ENCODE measurements at regions of chr11 and their contacts with region 1.

Region 1: GRCh38 chr11:3160252-3161031 is 4.7 kb downstream of the OSBPL5 start:
- DNase-seq: peak; percentile 87 to 91
- ATAC-seq: peak; percentile 75 to 88 (median 84)
- H3K4me3 ChIP-seq: peak overlapping the region; percentile 26 to 67 (median 58)
- H3K27ac ChIP-seq: peak overlapping the region in 9 of 10 donors; percentile 54 to 84 (median 74)
- H3K4me1 ChIP-seq: peaks cover 22 to 91% (median 79%) of the 10 kb centered on the region in 9 donors
- H3K27me3 ChIP-seq: no peaks in the 10 kb centered on the region
- CTCF ChIP-seq: no peak

Region 2: DNA sequence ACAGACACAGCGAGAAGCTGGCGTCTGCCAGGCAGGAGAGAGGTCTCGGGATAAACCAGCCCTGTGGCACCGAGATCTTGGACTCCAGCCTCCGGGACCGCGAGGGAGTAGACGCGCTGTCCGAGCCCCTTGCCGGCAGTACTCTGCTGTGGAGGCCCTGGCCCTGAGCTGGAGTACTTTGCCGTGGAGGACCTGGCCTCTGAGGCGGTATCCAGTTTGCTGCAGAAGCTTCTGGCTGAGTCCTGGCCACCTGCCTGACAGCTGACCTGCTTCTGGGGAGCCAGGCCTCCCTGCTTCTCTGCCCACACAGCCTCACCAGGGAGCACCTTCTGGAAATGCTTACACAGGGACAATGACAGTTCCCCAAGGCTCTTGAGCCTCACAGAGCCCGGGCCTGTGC is 71.6 kb before region 1 on chr11:
- intact Hi-C with region 1: no loop called
- DNase-seq: no peak
- ATAC-seq: no peak
- H3K4me3 ChIP-seq: no peak overlapping the region
- H3K27ac ChIP-seq: no peak overlapping the region
- H3K4me1 ChIP-seq: peaks cover 0 to 17% (median 5%) of the 10 kb centered on the region in 9 donors
- H3K27me3 ChIP-seq: no peaks in the 10 kb centered on the region
- CTCF ChIP-seq: no peak

Region 3: GRCh38 chr11:3109921-3110706 is 50.3 kb before region 1 on chr11:
- intact Hi-C with region 1: loop called in 1 of 10 experiments (anchors 10 kb)
- DNase-seq: peak in 1 of 2 donors; percentile 45
- ATAC-seq: peak; percentile 8 to 75 (median 73)
- H3K4me3 ChIP-seq: no peak overlapping the region
- H3K27ac ChIP-seq: no peak overlapping the region
- H3K4me1 ChIP-seq: peaks cover 0 to 19% (median 0%) of the 10 kb centered on the region in 9 donors
- H3K27me3 ChIP-seq: no peaks in the 10 kb centered on the region
- CTCF ChIP-seq: peak; percentile 47 to 76 (median 68)

Region 4: DNA sequence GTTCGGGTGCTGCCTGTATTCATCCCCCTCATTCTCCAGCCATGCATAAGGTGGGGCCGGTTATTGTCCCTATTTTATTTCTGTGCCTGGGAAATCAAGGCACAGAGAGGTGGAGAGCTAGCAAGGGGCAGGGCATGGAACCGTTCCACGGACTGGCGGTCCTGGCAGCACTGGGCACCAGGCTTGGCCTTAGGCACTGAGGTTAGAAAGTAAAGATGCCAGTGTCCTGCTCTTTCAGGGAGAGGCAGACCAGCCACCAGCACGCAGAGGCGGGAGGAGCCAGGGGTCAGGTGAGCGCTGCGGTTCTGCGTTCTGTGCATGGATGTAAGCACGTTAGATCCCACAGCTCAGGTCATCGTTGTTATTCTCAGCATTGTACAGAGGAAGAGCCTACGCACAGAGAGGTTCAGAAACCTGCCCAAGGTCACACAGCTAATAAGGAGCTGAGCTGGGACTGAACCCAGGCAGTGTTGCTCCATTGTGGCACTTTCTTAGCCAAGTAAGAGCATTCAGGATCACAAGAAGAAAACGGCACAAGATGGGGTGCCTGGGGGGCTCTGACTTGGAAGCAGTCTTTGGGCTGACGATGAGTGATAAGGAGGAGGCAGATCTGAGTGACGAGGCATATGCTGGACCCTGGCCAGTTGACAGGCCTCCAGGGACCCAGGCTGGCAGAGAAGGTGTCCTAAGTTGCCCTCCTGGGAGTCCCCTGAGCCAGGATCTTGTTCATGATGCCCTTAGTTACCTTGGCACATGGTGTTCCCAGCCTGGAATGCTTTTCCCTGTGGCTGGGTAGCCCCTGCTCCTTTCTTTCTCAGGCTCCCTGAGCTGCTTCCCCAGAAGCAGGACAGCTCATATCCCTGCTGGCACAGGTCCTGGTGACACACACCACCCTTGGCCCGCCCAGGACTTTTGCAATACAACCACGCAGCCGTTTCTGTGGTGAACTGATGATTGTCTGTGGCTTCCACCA is 36.4 kb before region 1 on chr11:
- intact Hi-C with region 1: loop called in 3 of 10 experiments (anchors 5 to 10 kb)
- DNase-seq: peak; percentile 63 to 74
- ATAC-seq: peak; percentile 32 to 81 (median 51)
- H3K4me3 ChIP-seq: no peak overlapping the region
- H3K27ac ChIP-seq: peak overlapping the region in 9 of 10 donors; percentile 4 to 69 (median 46)
- H3K4me1 ChIP-seq: peaks cover 14 to 53% (median 48%) of the 10 kb centered on the region in 9 donors
- H3K27me3 ChIP-seq: no peaks in the 10 kb centered on the region
- CTCF ChIP-seq: no peak

Measured in heart right ventricle (tissue), 16 donors.